ENCODE measurements at regions of chr19 and their contacts with region 1.

Region 1: GRCh38 chr19:16771618-16772017 is 52.0 kb downstream of the NWD1 start:
- DNase-seq: peak; percentile 69 to 80 (median 80)
- H3K4me3 ChIP-seq: no peak overlapping the region
- H3K4me3 Mint-ChIP-seq: no peak overlapping the region
- H3K27ac ChIP-seq: no peak overlapping the region
- H3K27ac Mint-ChIP-seq: no peak overlapping the region
- H3K4me1 ChIP-seq: peaks cover 0 to 8% of the 10 kb centered on the region in 2 donors
- H3K4me1 Mint-ChIP-seq: peaks cover 9% of the 10 kb centered on the region
- H3K27me3 ChIP-seq: peaks cover 0 to 3% of the 10 kb centered on the region in 2 donors
- H3K27me3 Mint-ChIP-seq: peaks cover 10 to 29% (median 12%) of the 10 kb centered on the region in 3 donors
- CTCF ChIP-seq: peak; percentile 92

Region 2: DNA sequence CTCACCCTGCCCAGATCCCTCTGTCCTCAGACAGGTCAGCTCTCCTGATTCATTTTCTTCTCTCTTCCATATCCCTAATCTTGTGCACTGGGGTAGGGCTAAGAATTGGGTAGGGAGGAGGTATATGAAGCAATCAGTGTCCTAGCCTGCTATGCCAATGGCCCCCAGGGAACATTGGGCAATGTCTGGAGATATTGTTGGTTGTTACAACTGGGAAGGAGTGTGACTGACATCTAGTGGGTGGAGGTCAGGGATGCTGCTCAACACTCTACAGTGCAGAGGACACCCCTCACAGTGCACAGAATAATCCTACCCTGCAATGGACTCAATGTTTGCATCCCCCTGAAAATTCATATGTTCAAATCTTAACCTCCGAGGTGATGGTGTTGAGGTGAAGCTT is 197.5 kb after region 1 on chr19:
- intact Hi-C with region 1: loop called (anchors 2 to 5 kb)
- DNase-seq: peak; percentile 56 to 73 (median 73)
- H3K4me3 ChIP-seq: no peak overlapping the region
- H3K4me3 Mint-ChIP-seq: no peak overlapping the region
- H3K27ac ChIP-seq: no peak overlapping the region
- H3K27ac Mint-ChIP-seq: peak overlapping the region in 3 of 7 donors; percentile 16 to 43 (median 19)
- H3K4me1 ChIP-seq: peaks cover 5 to 8% of the 10 kb centered on the region in 2 donors
- H3K4me1 Mint-ChIP-seq: peaks cover 12% of the 10 kb centered on the region
- H3K27me3 ChIP-seq: no peaks in the 10 kb centered on the region
- H3K27me3 Mint-ChIP-seq: peaks cover 7 to 14% (median 10%) of the 10 kb centered on the region in 3 donors
- CTCF ChIP-seq: peak; percentile 61

Region 3: GRCh38 chr19:17052439-17053210 is 281.0 kb after region 1 on chr19:
- intact Hi-C with region 1: loop called (anchors 1 to 5 kb)
- DNase-seq: peak; percentile 28 to 52 (median 47)
- H3K4me3 ChIP-seq: no peak overlapping the region
- H3K4me3 Mint-ChIP-seq: no peak overlapping the region
- H3K27ac ChIP-seq: no peak overlapping the region
- H3K27ac Mint-ChIP-seq: peak overlapping the region in 1 of 7 donors; percentile 7
- H3K4me1 ChIP-seq: no peaks in the 10 kb centered on the region
- H3K4me1 Mint-ChIP-seq: no peaks in the 10 kb centered on the region
- H3K27me3 ChIP-seq: no peaks in the 10 kb centered on the region
- H3K27me3 Mint-ChIP-seq: peaks cover 0 to 5% (median 0%) of the 10 kb centered on the region in 3 donors
- CTCF ChIP-seq: peak; percentile 69

Region 4: DNA sequence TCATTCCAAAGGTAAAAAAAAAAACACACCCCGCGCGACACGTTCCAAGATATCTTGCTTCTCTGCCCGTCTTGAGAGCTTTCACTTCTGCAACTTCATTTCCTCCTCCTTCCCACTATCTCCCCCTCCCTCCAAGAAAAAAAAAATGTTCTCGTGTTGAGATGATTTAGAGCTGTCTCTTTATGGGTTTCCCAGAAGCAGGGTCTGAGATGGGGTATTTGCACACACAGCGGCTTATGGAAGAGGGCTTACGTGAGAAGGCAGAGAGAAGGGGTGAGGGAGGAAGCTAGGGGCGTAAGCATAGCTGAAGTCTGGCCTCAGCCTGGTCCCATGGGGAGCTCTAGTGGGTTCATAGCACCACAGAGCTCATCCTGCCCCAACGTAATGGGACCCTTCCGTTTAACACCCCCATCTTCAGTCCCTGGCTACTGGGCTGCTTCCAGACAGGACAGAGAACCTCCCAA is 412.3 kb after region 1 on chr19:
- intact Hi-C with region 1: loop called in 1 of 2 experiments (anchors 5 kb)
- DNase-seq: peak; percentile 36 to 64 (median 42)
- H3K4me3 ChIP-seq: peak overlapping the region in 1 of 3 experiments; percentile 61
- H3K4me3 Mint-ChIP-seq: peak overlapping the region; percentile 75 to 89
- H3K27ac ChIP-seq: peak overlapping the region; percentile 69 to 75
- H3K27ac Mint-ChIP-seq: peak overlapping the region; percentile 87 to 96 (median 93)
- H3K4me1 ChIP-seq: peaks cover 24 to 29% of the 10 kb centered on the region in 2 donors
- H3K4me1 Mint-ChIP-seq: peaks cover 30% of the 10 kb centered on the region
- H3K27me3 ChIP-seq: no peaks in the 10 kb centered on the region
- H3K27me3 Mint-ChIP-seq: peaks cover 0 to 3% (median 0%) of the 10 kb centered on the region in 3 donors
- CTCF ChIP-seq: no peak

Measured in CD14-positive monocyte (primary cell).